ENCODE measurements at regions of chr19 and their contacts with region 1.

Region 1: GRCh38 chr19:7098701-7099596 is 29.4 kb downstream of the ZNF557 start:
- DNase-seq: peak; percentile 88 to 96
- H3K4me3 ChIP-seq: peak overlapping the region; percentile 51 to 75 (median 70)
- H3K27ac ChIP-seq: peak overlapping the region; percentile 87
- H3K4me1 ChIP-seq: peaks cover 0 to 4% (median 0%) of the 10 kb centered on the region in 4 experiments; a peak in 1 of 7 replicates
- H3K27me3 ChIP-seq: no peaks in the 10 kb centered on the region
- CTCF ChIP-seq: no peak
- EP300 ChIP-seq: no peak
- POLR2A ChIP-seq: peak; percentile 69 to 73
- RAD21 ChIP-seq: no peak

Region 2: GRCh38 chr19:6970443-6970842 is 128.5 kb before region 1 on chr19:
- CTCF ChIA-PET with region 1: no interaction called
- POLR2A ChIA-PET with region 1: no interaction called
- DNase-seq: no peak
- H3K4me3 ChIP-seq: no peak overlapping the region
- H3K27ac ChIP-seq: no peak overlapping the region
- H3K4me1 ChIP-seq: no peaks in the 10 kb centered on the region
- H3K27me3 ChIP-seq: no peaks in the 10 kb centered on the region
- CTCF ChIP-seq: no peak
- EP300 ChIP-seq: no peak
- POLR2A ChIP-seq: no peak
- RAD21 ChIP-seq: no peak

Region 3: DNA sequence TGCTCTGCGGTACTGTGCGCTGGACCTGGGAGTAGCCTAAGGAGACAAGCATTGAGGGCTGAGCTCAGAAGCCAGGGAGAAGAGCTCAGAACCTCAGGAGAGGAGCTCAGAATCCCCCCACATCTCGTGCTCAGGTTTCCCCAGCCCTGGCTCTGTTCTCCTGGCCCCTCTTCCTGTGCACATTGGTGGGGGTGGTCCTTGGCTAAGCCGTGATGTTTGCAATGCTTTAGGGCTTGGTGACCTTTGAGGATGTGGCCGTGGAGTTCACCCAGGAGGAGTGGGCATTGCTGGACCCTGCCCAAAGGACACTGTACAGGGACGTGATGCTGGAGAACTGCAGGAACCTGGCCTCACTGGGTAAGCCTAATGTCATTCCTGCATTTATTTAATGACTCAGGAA is 22.8 kb before region 1 on chr19:
- CTCF ChIA-PET with region 1: no interaction called
- POLR2A ChIA-PET with region 1: no interaction called
- DNase-seq: no peak
- H3K4me3 ChIP-seq: no peak overlapping the region
- H3K27ac ChIP-seq: no peak overlapping the region
- H3K4me1 ChIP-seq: no peaks in the 10 kb centered on the region
- H3K27me3 ChIP-seq: no peaks in the 10 kb centered on the region
- CTCF ChIP-seq: no peak
- EP300 ChIP-seq: no peak
- POLR2A ChIP-seq: no peak
- RAD21 ChIP-seq: no peak

Region 4: DNA sequence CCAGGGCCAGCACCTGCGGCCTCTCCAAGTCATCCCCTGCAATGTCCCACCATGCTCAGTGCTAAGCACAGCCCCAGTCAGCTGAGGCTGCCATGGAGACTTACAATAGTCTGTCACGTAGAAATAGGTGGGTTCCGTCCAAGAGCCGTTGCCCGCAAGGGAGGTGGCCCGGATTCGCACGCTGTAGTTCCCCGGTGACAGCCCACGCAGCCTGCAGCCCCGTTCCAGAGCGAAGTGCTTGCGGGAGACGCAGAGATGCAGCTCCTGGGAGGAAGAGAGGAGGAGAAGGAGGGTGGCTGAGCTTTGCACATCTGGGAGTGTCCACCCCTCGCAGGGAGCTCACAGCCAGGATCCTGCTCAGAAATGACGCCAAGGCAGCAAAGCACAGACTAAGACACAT is 33.1 kb after region 1 on chr19:
- CTCF ChIA-PET with region 1: no interaction called
- POLR2A ChIA-PET with region 1: no interaction called
- DNase-seq: no peak
- H3K4me3 ChIP-seq: no peak overlapping the region
- H3K27ac ChIP-seq: no peak overlapping the region
- H3K4me1 ChIP-seq: no peaks in the 10 kb centered on the region
- H3K27me3 ChIP-seq: no peaks in the 10 kb centered on the region
- CTCF ChIP-seq: no peak
- EP300 ChIP-seq: no peak
- POLR2A ChIP-seq: no peak
- RAD21 ChIP-seq: no peak

Region 5: GRCh38 chr19:7340959-7341837 is 242.2 kb after region 1 on chr19:
- CTCF ChIA-PET with region 1: interaction called, 35 read pairs
- POLR2A ChIA-PET with region 1: interaction called, 3 read pairs
- DNase-seq: peak; percentile 66 to 100
- H3K4me3 ChIP-seq: no peak overlapping the region
- H3K27ac ChIP-seq: no peak overlapping the region
- H3K4me1 ChIP-seq: no peaks in the 10 kb centered on the region
- H3K27me3 ChIP-seq: no peaks in the 10 kb centered on the region
- CTCF ChIP-seq: peak; percentile 73 to 97 (median 93)
- EP300 ChIP-seq: no peak
- POLR2A ChIP-seq: no peak
- RAD21 ChIP-seq: peak; percentile 99

Region 6: GRCh38 chr19:7348587-7349230 is 249.8 kb after region 1 on chr19 and contains the start of gene ARHGEF18:
- CTCF ChIA-PET with region 1: interaction called, 52 read pairs
- POLR2A ChIA-PET with region 1: no interaction called
- DNase-seq: no peak
- H3K4me3 ChIP-seq: no peak within 1 kb of the TSS
- H3K27ac ChIP-seq: no peak within 1 kb of the TSS
- H3K4me1 ChIP-seq: no peaks in the 10 kb centered on the region
- H3K27me3 ChIP-seq: no peaks in the 10 kb centered on the region; a peak in 1 of 7 replicates
- CTCF ChIP-seq: no peak
- EP300 ChIP-seq: no peak
- POLR2A ChIP-seq: no peak
- RAD21 ChIP-seq: no peak
- total RNA-seq, gene ARHGEF18: 35.9 and 36.8 TPM in 2 replicates

Measured in H1 (cell line).